GM12878 (cell line): ENCODE measurements at regions of chr6 and their contacts with region 1.

Region 1: GRCh38 chr6:106223300-106223930 is 102.1 kb downstream of the ATG5 start:
- DNase-seq: peak; percentile 52
- ATAC-seq: peak; percentile 91
- H3K4me3 ChIP-seq: no peak overlapping the region
- H3K27ac ChIP-seq: no peak overlapping the region
- H3K4me1 ChIP-seq: peaks cover 14% of the 10 kb centered on the region
- H3K27me3 ChIP-seq: no peaks in the 10 kb centered on the region
- CTCF ChIP-seq: peak; percentile 50 to 79 (median 53); a peak in 4 of 6 replicates
- EP300 ChIP-seq: no peak
- POLR2A ChIP-seq: no peak
- RAD21 ChIP-seq: peak; percentile 97

Region 2: GRCh38 chr6:105087571-105088211 is 1135.7 kb before region 1 on chr6:
- CTCF ChIA-PET with region 1: interaction called, 12 read pairs
- POLR2A ChIA-PET with region 1: no interaction called
- RAD21 ChIA-PET with region 1: no interaction called
- SMC1A ChIA-PET with region 1: interaction called, 6 read pairs
- in situ Hi-C with region 1: loop called (anchors 10 kb)
- intact Hi-C with region 1: no loop called
- DNase-seq: peak; percentile 17
- ATAC-seq: peak; percentile 82
- H3K4me3 ChIP-seq: no peak overlapping the region
- H3K27ac ChIP-seq: no peak overlapping the region
- H3K4me1 ChIP-seq: no peaks in the 10 kb centered on the region
- H3K27me3 ChIP-seq: no peaks in the 10 kb centered on the region
- CTCF ChIP-seq: peak; percentile 71 to 87 (median 77); a peak in 5 of 6 replicates
- EP300 ChIP-seq: no peak
- POLR2A ChIP-seq: no peak
- RAD21 ChIP-seq: peak; percentile 92

Region 3: DNA sequence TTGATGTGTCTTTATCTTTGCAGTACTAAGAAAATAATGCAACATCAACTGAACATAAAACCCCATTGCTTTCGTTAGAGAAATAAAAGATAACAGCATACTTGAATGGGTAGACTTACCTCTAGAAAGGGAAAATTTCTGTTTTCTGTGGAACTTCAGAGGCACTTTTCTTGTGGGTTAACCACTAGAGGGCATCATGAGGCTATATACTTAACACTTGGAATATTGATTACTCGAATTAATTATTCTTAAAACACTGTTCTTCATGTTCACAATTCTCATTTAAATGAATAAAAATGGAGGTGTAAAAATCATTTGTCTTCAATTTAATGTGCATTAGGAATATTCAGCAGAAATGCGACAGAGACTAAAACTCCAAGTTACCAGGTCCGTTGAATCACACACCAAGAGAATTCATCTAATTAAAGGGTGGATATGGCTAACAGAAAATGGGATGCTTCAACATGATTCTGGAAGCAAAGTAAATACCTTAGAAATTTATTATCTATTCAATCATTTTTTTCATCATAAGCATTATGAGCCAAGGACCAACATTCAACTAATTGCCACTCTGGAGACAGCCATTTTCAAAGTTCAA is 489.8 kb before region 1 on chr6:
- CTCF ChIA-PET with region 1: interaction called, 41 read pairs
- POLR2A ChIA-PET with region 1: no interaction called
- RAD21 ChIA-PET with region 1: interaction called, 9 read pairs
- SMC1A ChIA-PET with region 1: interaction called, 63 read pairs
- in situ Hi-C with region 1: loop called (anchors 10 kb)
- intact Hi-C with region 1: loop called (anchors 2 kb)
- DNase-seq: no peak
- ATAC-seq: peak; percentile 41; the same call in 1 of the 3 replicates
- H3K4me3 ChIP-seq: no peak overlapping the region
- H3K27ac ChIP-seq: no peak overlapping the region
- H3K4me1 ChIP-seq: no peaks in the 10 kb centered on the region
- H3K27me3 ChIP-seq: no peaks in the 10 kb centered on the region
- CTCF ChIP-seq: peak; percentile 48 to 52 (median 50); a peak in 5 of 6 replicates
- EP300 ChIP-seq: no peak
- POLR2A ChIP-seq: no peak
- RAD21 ChIP-seq: peak; percentile 56

Region 4: GRCh38 chr6:105851113-105851580 is 372.3 kb before region 1 on chr6:
- CTCF ChIA-PET with region 1: no interaction called
- POLR2A ChIA-PET with region 1: no interaction called
- RAD21 ChIA-PET with region 1: no interaction called
- SMC1A ChIA-PET with region 1: no interaction called
- in situ Hi-C with region 1: no loop called
- intact Hi-C with region 1: no loop called
- DNase-seq: no peak
- ATAC-seq: no peak
- H3K4me3 ChIP-seq: no peak overlapping the region
- H3K27ac ChIP-seq: no peak overlapping the region
- H3K4me1 ChIP-seq: no peaks in the 10 kb centered on the region
- H3K27me3 ChIP-seq: no peaks in the 10 kb centered on the region
- CTCF ChIP-seq: no peak
- EP300 ChIP-seq: no peak
- POLR2A ChIP-seq: no peak
- RAD21 ChIP-seq: no peak

Region 5: DNA sequence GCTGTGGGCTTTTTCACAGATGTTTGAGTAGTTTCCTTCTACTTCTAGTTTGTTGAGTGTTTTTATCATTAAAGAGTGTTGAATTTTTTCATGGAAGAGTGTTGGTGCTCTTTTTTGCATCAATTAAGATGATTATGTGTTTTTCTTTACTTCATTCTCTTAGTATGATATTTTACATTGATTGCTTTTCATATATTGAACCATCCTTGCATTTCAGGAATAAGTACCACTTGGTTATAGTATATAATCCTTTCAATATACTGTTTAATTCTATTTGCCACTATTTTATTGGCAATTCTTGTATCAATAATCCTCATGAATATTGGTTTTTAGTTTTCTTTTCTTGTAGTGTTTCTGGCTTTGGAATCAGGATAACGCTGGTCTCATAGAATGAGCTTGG is 251.0 kb before region 1 on chr6:
- CTCF ChIA-PET with region 1: no interaction called
- POLR2A ChIA-PET with region 1: no interaction called
- RAD21 ChIA-PET with region 1: no interaction called
- SMC1A ChIA-PET with region 1: no interaction called
- in situ Hi-C with region 1: no loop called
- intact Hi-C with region 1: no loop called
- DNase-seq: no peak
- ATAC-seq: no peak
- H3K4me3 ChIP-seq: no peak overlapping the region
- H3K27ac ChIP-seq: no peak overlapping the region
- H3K4me1 ChIP-seq: no peaks in the 10 kb centered on the region
- H3K27me3 ChIP-seq: no peaks in the 10 kb centered on the region
- CTCF ChIP-seq: no peak
- EP300 ChIP-seq: no peak
- POLR2A ChIP-seq: no peak
- RAD21 ChIP-seq: no peak

Region 6: DNA sequence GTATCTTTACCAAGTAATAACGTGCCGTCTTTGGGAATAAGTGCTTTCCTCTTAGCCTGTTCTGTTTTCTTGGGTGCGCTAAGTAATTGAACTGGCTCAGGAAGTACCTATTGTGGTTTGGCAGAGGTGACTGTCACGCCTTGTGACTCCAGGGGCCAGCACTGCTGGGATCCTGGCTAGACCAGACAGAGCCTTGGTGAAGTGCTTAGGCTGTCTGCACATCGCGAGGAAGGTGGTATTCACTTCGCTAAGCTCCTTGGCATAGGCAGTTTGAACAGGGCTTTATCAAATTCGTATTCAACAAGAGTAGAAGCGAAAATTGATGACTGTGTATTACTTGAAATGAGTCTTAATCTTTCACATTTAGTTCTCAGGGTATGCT is 119.7 kb before region 1 on chr6:
- CTCF ChIA-PET with region 1: interaction called, 19 read pairs
- POLR2A ChIA-PET with region 1: no interaction called
- RAD21 ChIA-PET with region 1: interaction called, 37 read pairs
- SMC1A ChIA-PET with region 1: interaction called, 51 read pairs
- in situ Hi-C with region 1: loop called (anchors 10 kb)
- intact Hi-C with region 1: no loop called
- DNase-seq: no peak
- ATAC-seq: peak; percentile 56
- H3K4me3 ChIP-seq: 0 out of 2 replicates have a peak overlapping the region, but pooled peaks have one; percentile 6
- H3K27ac ChIP-seq: 0 out of 2 replicates have a peak overlapping the region, but pooled peaks have one; percentile 15
- H3K4me1 ChIP-seq: peaks cover 46% of the 10 kb centered on the region
- H3K27me3 ChIP-seq: no peaks in the 10 kb centered on the region; a peak in 1 of 4 replicates
- CTCF ChIP-seq: no peak
- EP300 ChIP-seq: no peak
- POLR2A ChIP-seq: no peak
- RAD21 ChIP-seq: no peak

Region 7: GRCh38 chr6:106155219-106155830 is 68.1 kb before region 1 on chr6:
- CTCF ChIA-PET with region 1: interaction called, 12 read pairs
- POLR2A ChIA-PET with region 1: no interaction called
- RAD21 ChIA-PET with region 1: no interaction called
- SMC1A ChIA-PET with region 1: no interaction called
- in situ Hi-C with region 1: no loop called
- intact Hi-C with region 1: no loop called
- DNase-seq: no peak
- ATAC-seq: no peak
- H3K4me3 ChIP-seq: no peak overlapping the region
- H3K27ac ChIP-seq: no peak overlapping the region
- H3K4me1 ChIP-seq: no peaks in the 10 kb centered on the region
- H3K27me3 ChIP-seq: no peaks in the 10 kb centered on the region
- CTCF ChIP-seq: no peak
- EP300 ChIP-seq: no peak
- POLR2A ChIP-seq: no peak
- RAD21 ChIP-seq: no peak

Region 8: DNA sequence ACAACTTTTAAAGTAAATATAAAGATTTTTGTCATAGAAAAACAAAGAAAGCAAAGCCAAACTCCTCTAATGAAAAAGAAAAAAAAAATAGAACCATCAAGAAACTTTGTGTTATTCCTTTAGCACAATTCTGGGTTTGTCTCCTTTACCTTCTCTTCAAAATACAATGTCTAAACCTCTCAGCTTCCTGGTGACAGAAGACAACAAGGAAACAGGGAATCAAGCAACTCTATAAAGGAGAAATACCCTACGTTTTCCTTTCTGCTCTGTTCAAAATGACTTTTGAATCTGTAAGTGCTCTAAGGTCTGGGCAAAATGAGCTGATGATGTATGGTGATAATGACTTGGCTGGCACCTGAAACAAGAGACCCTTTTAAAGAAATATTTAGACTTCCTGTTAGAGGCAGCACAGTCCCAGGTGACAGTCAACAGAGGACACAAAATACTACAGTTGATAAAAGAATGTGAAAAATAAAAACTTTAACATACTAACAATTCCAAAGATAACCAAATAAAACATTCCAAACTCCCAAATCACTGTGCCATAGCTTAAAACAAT is 35.9 kb before region 1 on chr6:
- CTCF ChIA-PET with region 1: interaction called, 21 read pairs
- POLR2A ChIA-PET with region 1: interaction called, 3 read pairs
- RAD21 ChIA-PET with region 1: interaction called, 12 read pairs
- SMC1A ChIA-PET with region 1: interaction called, 61 read pairs
- in situ Hi-C with region 1: no loop called
- intact Hi-C with region 1: no loop called
- DNase-seq: no peak
- ATAC-seq: peak; percentile 28; the same call in 1 of the 3 replicates
- H3K4me3 ChIP-seq: no peak overlapping the region
- H3K27ac ChIP-seq: peak overlapping the region; percentile 56; the same call in 1 of the 2 replicates
- H3K4me1 ChIP-seq: peaks cover 28% of the 10 kb centered on the region
- H3K27me3 ChIP-seq: no peaks in the 10 kb centered on the region
- CTCF ChIP-seq: no peak
- EP300 ChIP-seq: no peak
- POLR2A ChIP-seq: no peak
- RAD21 ChIP-seq: no peak

Region 9: DNA sequence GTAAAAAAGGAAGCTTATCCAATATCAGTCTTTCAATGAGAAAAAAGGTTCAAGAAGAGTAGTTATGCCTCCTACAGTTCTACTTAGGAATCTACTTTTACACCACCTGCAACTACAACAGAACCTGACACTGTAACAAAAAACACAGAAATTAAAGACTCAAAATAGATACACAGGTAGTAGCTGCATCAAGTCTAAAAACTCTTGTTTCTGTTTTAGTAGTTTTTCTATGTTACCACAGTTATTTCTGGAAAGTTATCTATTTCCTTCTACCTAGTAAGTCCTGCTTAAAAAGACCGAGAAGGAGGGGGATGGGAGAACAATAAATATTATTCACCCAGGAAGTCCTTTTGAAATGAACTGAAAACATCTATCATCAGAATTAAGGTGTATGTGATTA is 49.7 kb after region 1 on chr6:
- CTCF ChIA-PET with region 1: interaction called, 15 read pairs
- POLR2A ChIA-PET with region 1: no interaction called
- RAD21 ChIA-PET with region 1: interaction called, 9 read pairs
- SMC1A ChIA-PET with region 1: interaction called, 6 read pairs
- in situ Hi-C with region 1: no loop called
- intact Hi-C with region 1: no loop called
- DNase-seq: peak; percentile 4
- ATAC-seq: peak; percentile 61
- H3K4me3 ChIP-seq: no peak overlapping the region
- H3K27ac ChIP-seq: no peak overlapping the region
- H3K4me1 ChIP-seq: peaks cover 23% of the 10 kb centered on the region
- H3K27me3 ChIP-seq: no peaks in the 10 kb centered on the region
- CTCF ChIP-seq: 0 out of 6 replicates have a peak, but pooled peaks of 2 of the 3 experiments have one; percentile 6 to 20
- EP300 ChIP-seq: no peak
- POLR2A ChIP-seq: no peak
- RAD21 ChIP-seq: peak; percentile 28; the same call in 1 of the 2 replicates

Region 10: DNA sequence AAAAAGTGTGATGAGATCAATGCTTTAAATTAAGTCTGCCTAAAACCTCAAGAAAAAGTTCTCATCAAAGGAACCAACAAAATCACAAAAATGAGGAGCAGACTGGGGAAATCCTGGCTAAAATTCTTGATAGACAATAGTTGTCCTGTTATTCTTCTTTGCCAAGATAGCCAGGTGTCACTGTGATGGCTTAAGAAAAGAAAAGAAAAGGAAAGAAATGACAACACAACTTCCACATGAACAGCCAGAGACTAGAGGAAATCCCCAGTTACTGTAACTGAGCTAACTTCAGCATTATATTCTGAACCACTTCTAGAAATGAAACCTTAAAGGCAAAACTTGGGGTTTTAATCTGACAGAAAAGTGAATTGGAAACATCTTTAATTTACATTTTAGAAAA is 621.5 kb after region 1 on chr6:
- CTCF ChIA-PET with region 1: no interaction called
- POLR2A ChIA-PET with region 1: no interaction called
- RAD21 ChIA-PET with region 1: no interaction called
- SMC1A ChIA-PET with region 1: no interaction called
- in situ Hi-C with region 1: no loop called
- intact Hi-C with region 1: no loop called
- DNase-seq: peak; percentile 65
- ATAC-seq: peak; percentile 75
- H3K4me3 ChIP-seq: peak overlapping the region; percentile 27; the same call in 1 of the 2 replicates
- H3K27ac ChIP-seq: peak overlapping the region; percentile 96
- H3K4me1 ChIP-seq: peaks cover 44% of the 10 kb centered on the region
- H3K27me3 ChIP-seq: no peaks in the 10 kb centered on the region
- CTCF ChIP-seq: no peak
- EP300 ChIP-seq: peak; percentile 43 to 60; a peak in 2 of 4 replicates
- POLR2A ChIP-seq: no peak
- RAD21 ChIP-seq: no peak